AG04450 (cell line): ENCODE measurements at regions of chr3 and their contacts with region 1.

Region 1: GRCh38 chr3:32374788-32375595 is 16.7 kb upstream of the CMTM7 start:
- DNase-seq: peak; percentile 44
- H3K4me3 ChIP-seq: no peak overlapping the region
- H3K27ac ChIP-seq: no peak overlapping the region
- H3K27me3 ChIP-seq: no peaks in the 10 kb centered on the region
- CTCF ChIP-seq: peak; percentile 67

Region 2: GRCh38 chr3:32391643-32392535 is 16.9 kb after region 1 on chr3 and contains the start of gene CMTM7:
- CTCF ChIA-PET with region 1: interaction called, 24 read pairs
- POLR2A ChIA-PET with region 1: no interaction called
- DNase-seq: no peak
- H3K4me3 ChIP-seq: peak within 1 kb of the TSS; percentile 76
- H3K27ac ChIP-seq: peak within 1 kb of the TSS; percentile 65
- H3K27me3 ChIP-seq: no peaks in the 10 kb centered on the region
- CTCF ChIP-seq: 0 out of 2 replicates have a peak, but pooled peaks have one; percentile 5
- polyA plus RNA-seq, gene CMTM7: 17.3 and 17.7 TPM in 2 replicates

Region 3: GRCh38 chr3:32398531-32398930 is 23.5 kb after region 1 on chr3:
- CTCF ChIA-PET with region 1: interaction called, 19 read pairs
- POLR2A ChIA-PET with region 1: no interaction called
- DNase-seq: no peak
- H3K4me3 ChIP-seq: no peak overlapping the region
- H3K27ac ChIP-seq: no peak overlapping the region
- H3K27me3 ChIP-seq: no peaks in the 10 kb centered on the region
- CTCF ChIP-seq: no peak